Mammary epithelial cell (primary cell): ENCODE measurements at regions of chr10 and their contacts with region 1.

Region 1: GRCh38 chr10:124802313-124802675 is 675 bp downstream of the ABRAXAS2 start:
- DNase-seq: no peak
- H3K4me3 ChIP-seq: peak overlapping the region; percentile 62 to 79 (median 76)
- H3K27ac ChIP-seq: peak overlapping the region; percentile 89
- H3K4me1 ChIP-seq: no peaks in the 10 kb centered on the region
- H3K27me3 ChIP-seq: no peaks in the 10 kb centered on the region
- CTCF ChIP-seq: no peak

Region 2: DNA sequence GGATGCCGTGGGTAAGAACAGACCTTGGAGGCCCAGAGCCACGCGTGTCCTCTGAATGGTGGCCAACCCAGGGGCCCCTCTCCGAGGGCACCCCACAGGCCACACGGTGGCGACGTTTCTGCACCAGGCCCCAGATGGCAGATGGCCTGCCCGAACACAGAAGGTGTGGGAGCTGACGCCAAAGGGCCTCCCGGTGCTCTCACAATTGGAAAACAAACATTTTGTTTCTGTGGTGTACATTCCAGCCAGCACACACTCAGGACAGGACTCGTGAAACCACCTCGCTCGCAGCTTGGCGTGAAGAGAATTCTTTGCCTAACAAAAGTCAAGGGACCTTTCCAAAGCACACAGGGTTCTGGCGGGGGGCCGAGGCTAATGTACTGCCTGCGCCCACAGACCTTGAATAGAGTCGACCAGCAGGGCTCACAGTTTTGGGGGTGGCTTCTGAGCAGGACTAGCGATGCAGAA is 170.2 kb before region 1 on chr10:
- CTCF ChIA-PET with region 1: no interaction called
- dilution Hi-C with region 1: no loop called
- in situ Hi-C with region 1: no loop called
- intact Hi-C with region 1: loop called (anchors 10 kb)
- DNase-seq: peak; percentile 82
- H3K4me3 ChIP-seq: peak overlapping the region in 1 of 3 experiments; percentile 19
- H3K27ac ChIP-seq: peak overlapping the region; percentile 78
- H3K4me1 ChIP-seq: peaks cover 33% of the 10 kb centered on the region
- H3K27me3 ChIP-seq: no peaks in the 10 kb centered on the region
- CTCF ChIP-seq: peak; percentile 43 to 79

Region 3: GRCh38 chr10:124791378-124792348 is 10.6 kb before region 1 on chr10 and contains the start of gene EEF1AKMT2:
- CTCF ChIA-PET with region 1: no interaction called
- dilution Hi-C with region 1: no loop called
- in situ Hi-C with region 1: no loop called
- intact Hi-C with region 1: loop called (anchors 1 kb)
- DNase-seq: peak; percentile 82
- H3K4me3 ChIP-seq: peak within 1 kb of the TSS; percentile 94 to 97 (median 95)
- H3K27ac ChIP-seq: peak within 1 kb of the TSS; percentile 79
- H3K4me1 ChIP-seq: no peaks in the 10 kb centered on the region
- H3K27me3 ChIP-seq: no peaks in the 10 kb centered on the region
- CTCF ChIP-seq: peak in 1 of 2 donors; percentile 44
- total RNA-seq, gene EEF1AKMT2: 13.0 to 15.7 TPM